Aorta (tissue), 5 donors: ENCODE measurements at regions of chr1 and their contacts with region 1.

Region 1: DNA sequence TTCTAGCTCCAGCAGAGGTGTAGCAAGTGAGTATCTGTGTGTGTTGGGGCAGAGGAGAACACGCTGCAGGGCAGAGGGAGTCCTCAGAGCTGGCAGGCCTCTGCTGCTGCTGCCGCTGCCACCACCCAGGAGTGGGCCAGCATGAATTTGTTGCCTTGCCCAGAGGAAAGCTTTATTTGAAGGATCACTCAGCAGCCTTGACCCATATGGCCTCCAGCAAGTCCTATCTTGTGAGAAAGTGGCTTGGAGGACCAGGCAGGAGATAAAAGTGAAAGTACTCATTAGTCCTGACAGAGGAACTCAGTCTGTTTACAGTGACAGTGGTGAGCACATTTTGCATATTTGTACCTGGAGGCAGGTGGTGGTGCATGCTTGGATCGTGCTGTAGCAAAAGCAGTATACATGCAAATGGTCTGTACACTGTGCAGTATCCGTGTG is 3.1 kb downstream of the TRAF5 start:
- DNase-seq: no peak
- ATAC-seq: no peak
- H3K4me3 ChIP-seq: no peak overlapping the region
- H3K27ac ChIP-seq: no peak overlapping the region
- H3K4me1 ChIP-seq: peaks cover 0 to 11% of the 10 kb centered on the region in 2 donors
- H3K27me3 ChIP-seq: no peaks in the 10 kb centered on the region

Region 2: DNA sequence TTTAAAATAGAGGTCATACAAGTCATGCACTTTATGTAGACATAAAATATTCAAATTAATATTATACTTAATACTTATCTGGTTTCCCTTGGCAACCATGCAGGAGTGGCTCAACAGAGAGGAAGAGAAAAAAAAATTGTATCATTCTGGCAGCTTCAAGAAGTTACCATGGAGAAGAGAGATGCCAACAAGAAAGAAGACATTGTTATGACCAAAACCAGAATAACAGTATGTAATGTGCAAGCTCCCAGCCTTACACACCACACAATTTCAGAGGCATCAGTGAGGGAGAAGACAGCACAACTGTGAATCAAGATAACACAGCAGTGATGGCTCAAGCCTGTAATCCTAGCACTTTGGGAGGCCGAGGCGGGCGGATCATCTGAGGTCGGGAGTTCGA is 119.7 kb before region 1 on chr1:
- intact Hi-C with region 1: no loop called
- DNase-seq: no peak
- ATAC-seq: no peak
- H3K4me3 ChIP-seq: no peak overlapping the region
- H3K27ac ChIP-seq: no peak overlapping the region
- H3K4me1 ChIP-seq: no peaks in the 10 kb centered on the region
- H3K27me3 ChIP-seq: no peaks in the 10 kb centered on the region

Region 3: DNA sequence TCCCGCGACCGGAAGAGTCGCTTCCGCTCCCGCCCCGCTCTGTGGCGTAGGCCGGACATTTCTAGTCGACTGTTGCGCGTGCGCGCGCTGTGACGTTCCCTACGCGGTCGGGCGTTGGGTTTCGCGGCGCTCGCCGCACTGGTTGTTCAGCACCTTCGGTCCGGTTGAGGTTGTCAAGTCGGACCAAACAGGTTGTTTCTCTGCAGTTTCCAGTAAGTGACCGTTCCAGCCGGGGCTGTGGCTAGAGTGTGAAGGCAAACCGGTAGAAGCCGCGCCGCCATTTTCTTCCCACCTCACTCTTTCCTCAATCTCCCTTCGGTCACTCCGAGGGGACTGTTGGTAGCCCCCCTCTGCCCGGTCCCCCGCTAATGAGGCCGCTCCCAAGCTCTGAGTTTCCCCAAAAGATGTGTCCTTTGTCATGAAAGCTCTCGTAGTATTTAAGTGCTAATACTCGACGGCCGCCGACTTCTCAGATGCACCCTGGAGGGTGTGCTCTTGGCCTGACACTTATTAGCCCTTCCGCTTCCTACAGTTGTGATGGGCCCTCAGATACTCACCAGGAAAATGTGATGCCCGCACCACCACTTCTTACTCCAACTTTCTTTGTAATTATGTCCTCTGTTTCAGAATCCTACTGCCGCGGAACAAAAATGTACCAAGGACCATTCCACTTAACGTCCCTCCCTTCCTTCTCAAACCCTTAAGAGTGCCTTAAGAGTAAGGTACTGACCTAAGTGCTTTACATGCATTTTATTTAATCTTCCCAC is 53.1 kb after region 1 on chr1:
- intact Hi-C with region 1: loop called (anchors 2 to 5 kb)
- DNase-seq: peak; percentile 96 to 98
- ATAC-seq: peak; percentile 99
- H3K4me3 ChIP-seq: peak overlapping the region; percentile 58 to 70
- H3K27ac ChIP-seq: peak overlapping the region; percentile 68 to 99
- H3K4me1 ChIP-seq: no peaks in the 10 kb centered on the region
- H3K27me3 ChIP-seq: no peaks in the 10 kb centered on the region